Posterior vena cava (tissue), 2 donors: ENCODE measurements at regions of chrX and their contacts with region 1.

Region 1: DNA sequence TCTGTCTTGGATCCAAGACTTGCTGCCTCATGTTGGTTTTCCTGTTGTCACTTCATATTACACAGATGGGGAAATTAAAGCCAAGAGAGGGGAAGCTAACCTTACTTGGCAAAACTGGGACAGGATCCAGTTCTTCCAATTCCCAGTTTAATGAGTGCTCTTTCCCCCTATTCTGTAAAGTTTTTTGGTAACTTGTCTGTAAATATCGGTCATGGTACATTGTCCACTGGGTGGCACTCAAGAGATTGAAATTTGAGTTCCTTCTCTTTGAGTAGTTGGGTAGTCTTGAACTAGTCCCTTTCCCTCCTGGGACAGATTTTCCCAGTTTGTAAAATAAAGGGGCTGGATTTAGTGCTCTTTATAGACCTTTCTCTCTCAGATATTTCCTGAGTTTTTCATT is 12.4 kb upstream of the EOLA2 start:
- DNase-seq: no peak

Region 2: DNA sequence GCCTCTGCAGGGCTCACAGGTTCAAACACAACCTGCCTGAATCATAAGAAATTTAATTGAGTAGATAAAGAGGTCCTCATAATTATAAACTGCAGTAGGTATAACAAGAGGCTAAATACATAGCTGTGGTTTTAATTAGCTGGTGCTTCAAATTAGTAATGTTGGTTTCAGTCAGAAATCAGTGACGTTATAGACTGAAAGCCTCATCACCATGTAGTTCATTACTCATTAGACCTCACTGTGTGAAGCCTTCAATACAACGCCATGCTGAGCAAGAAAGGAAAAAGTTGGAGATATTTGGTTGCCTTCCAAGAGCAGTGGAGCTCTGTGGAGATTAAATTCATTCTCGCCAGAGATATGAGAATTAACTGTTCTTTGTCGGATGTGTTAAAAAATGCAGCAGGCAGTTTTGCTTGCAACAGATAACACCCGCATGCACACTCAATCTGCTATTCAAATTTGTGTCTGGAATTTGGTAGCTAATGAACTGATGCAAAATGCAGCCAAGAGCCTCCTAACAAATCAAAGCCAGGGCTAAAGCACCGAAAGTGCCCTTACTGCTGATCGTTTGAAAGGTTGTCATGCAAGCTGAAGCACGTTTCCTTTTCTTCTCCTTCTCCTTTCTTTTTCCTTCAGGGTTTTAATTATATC is 1301.4 kb before region 1 on chrX:
- intact Hi-C with region 1: no loop called
- DNase-seq: no peak

Region 3: DNA sequence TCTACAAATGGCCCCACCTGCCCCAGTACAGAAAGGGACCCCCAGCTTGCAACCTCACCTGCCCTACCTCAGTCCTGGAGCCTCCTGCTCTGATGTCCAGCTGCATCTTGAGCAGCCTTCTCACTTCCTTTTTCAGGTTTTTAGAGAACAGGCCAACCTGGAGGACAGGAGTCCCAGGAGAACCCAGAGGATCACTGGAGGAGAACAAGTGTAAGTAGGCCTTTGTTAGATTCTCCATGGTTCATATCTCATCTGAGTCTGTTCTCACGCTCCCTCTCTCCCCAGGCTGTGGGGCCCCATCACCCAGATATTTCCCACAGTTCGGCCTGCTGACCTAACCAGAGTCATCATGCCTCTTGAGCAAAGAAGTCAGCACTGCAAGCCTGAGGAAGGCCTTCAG is 235.2 kb before region 1 on chrX:
- intact Hi-C with region 1: no loop called
- DNase-seq: no peak

Region 4: GRCh38 chrX:150062292-150063137 is 111.8 kb after region 1 on chrX:
- intact Hi-C with region 1: no loop called
- DNase-seq: no peak

Region 5: DNA sequence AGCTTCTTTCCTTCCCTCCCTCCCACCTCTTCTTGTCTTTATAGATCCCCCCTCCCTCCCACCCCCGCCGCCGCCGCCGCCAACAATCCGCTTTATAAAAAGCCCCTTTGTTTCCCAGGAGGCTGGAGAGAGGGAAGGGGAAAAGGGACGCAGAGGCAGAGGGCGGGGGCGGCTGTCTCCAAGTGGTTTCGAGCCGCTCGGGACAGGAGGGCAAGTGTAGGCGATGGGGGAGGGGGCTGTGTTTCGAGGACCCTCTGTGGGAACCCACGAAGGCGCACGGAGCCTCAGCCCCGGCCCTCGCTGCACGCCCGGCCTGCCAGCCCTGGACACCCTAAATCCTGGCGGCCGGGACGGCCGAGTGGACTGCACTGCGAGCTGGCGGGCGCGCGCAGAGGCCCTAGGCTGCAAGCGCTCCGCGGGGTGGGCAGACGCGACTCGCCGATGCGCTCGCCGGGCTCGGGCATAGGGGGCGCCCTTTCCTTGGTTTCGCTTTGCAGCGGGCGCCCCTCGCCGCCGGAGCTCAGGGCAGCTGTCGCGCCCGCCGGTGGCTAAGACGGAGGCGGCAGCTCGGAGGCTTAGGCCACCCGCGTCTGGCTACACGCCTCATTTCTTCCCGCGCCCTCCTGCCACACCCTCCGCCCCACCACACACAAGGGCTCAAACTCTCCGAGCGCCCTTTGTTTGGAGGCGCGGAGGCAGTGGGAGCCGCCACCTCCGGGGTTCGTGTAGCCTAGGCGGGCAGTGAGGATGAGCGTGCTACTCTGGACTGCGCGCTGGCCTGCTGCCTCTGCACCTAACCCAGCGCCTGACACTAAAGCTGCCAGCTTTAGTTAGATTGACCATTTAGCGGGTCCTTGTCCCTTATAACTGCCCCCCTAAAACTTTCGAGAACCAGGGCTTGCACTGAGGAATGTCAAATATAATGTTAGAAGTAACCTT is 414.6 kb after region 1 on chrX:
- intact Hi-C with region 1: loop called in 1 of 2 experiments (anchors 10 kb)
- DNase-seq: peak; percentile 91

Region 6: DNA sequence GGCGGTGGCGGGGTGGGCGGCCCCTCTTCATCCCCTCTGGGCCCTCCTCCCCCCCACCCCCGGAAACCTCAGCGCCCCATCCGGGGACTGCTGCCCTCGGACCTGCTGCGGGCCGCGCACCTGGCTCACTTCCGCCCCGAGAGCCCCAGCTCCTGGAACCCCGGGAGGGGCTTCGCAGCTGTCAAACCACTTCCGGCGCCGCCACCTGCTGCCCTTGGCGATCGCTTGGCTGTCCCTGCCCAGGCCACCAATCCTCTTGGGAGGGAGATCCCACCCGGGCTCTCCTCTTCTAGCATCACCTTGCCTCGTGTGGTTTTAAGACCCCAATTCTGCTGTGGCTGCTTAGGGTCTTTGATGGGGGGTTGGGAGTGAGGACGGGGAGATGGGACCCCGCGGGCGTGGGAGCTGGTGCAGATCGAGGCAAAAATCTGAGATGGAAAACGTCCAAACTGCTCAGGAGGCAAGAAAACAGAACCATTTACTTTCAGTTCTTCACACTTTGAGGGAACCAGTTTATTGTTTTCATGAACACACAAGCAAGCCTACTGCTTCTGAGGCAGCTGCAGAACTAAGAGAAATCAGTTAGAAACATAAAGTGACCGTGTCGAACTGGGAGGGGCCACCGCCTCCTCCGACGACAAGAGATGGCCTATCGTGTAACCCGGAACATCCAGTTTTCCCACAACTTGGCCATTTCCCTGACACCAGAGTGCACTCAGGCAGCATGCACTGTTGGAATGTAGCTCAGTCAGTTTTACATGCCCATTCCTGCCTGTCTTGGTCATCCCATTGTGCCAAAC is 743.3 kb after region 1 on chrX:
- intact Hi-C with region 1: loop called in 1 of 2 experiments (anchors 10 kb)
- DNase-seq: no peak